ENCODE measurements at regions of chr13 and their contacts with region 1.

Region 1: GRCh38 chr13:91133941-91134802 is 213.3 kb upstream of the MIR17HG start:
- DNase-seq: peak in 7 of 14 experiments; percentile 1 to 56 (median 20)
- ATAC-seq: no peak
- H3K4me3 ChIP-seq: no peak overlapping the region
- H3K4me3 Mint-ChIP-seq: no peak overlapping the region
- H3K27ac ChIP-seq: no peak overlapping the region
- H3K27ac Mint-ChIP-seq: no peak overlapping the region
- H3K4me1 ChIP-seq: no peaks in the 10 kb centered on the region
- H3K4me1 Mint-ChIP-seq: no peaks in the 10 kb centered on the region
- H3K27me3 ChIP-seq: no peaks in the 10 kb centered on the region
- H3K27me3 Mint-ChIP-seq: no peaks in the 10 kb centered on the region
- CTCF ChIP-seq: peak; percentile 69

Region 2: DNA sequence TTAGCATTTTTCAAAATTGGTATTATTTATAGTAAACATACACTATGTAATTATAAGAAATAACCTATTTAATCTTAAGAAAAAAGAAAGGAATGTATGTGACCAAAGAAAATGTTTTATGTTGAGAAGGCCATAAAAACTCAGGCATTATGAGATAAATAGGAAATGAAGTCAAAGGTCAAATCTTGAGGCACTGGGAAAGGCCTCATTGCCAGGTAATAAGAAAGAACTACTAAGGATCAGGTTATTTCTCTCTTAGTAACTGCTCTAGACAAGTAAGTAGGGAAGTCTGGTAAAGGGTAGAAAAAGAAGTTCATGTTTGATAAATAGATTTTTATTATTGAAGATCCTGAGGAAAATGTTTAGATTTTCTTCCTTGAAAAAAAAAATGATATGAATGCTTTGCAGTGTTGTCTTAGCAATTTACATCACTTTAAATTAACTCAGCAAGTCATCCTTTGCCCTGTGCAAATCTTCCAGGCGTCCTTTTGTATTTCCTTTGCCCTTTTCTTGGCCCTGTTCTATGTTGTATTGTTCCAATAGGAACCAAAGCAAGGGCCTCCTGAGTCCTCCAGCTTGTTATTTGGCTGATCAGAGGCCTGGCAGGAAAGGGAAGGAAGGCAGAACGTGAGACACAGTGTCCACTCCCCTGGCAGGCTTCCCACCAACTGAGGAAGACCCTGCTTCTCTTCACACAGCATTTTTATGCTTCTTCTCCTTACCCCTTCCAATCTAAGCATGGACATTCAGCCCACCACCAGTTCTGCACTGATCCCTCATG is 47.0 kb before region 1 on chr13:
- CTCF ChIA-PET with region 1: no interaction called
- POLR2A ChIA-PET with region 1: no interaction called
- intact Hi-C with region 1: no loop called
- DNase-seq: no peak
- ATAC-seq: no peak
- H3K4me3 ChIP-seq: no peak overlapping the region
- H3K4me3 Mint-ChIP-seq: no peak overlapping the region
- H3K27ac ChIP-seq: no peak overlapping the region
- H3K27ac Mint-ChIP-seq: no peak overlapping the region
- H3K4me1 ChIP-seq: no peaks in the 10 kb centered on the region
- H3K4me1 Mint-ChIP-seq: no peaks in the 10 kb centered on the region
- H3K27me3 ChIP-seq: no peaks in the 10 kb centered on the region
- H3K27me3 Mint-ChIP-seq: no peaks in the 10 kb centered on the region
- CTCF ChIP-seq: no peak

Region 3: GRCh38 chr13:91247768-91248167 is 113.6 kb after region 1 on chr13:
- CTCF ChIA-PET with region 1: no interaction called
- POLR2A ChIA-PET with region 1: no interaction called
- intact Hi-C with region 1: loop called in 1 of 2 experiments (anchors 5 kb)
- DNase-seq: no peak
- ATAC-seq: no peak
- H3K4me3 ChIP-seq: no peak overlapping the region
- H3K4me3 Mint-ChIP-seq: no peak overlapping the region
- H3K27ac ChIP-seq: no peak overlapping the region
- H3K27ac Mint-ChIP-seq: no peak overlapping the region
- H3K4me1 ChIP-seq: no peaks in the 10 kb centered on the region
- H3K4me1 Mint-ChIP-seq: no peaks in the 10 kb centered on the region
- H3K27me3 ChIP-seq: peaks cover 0 to 4% of the 10 kb centered on the region in 2 experiments
- H3K27me3 Mint-ChIP-seq: peaks cover 10% of the 10 kb centered on the region
- CTCF ChIP-seq: no peak

Region 4: DNA sequence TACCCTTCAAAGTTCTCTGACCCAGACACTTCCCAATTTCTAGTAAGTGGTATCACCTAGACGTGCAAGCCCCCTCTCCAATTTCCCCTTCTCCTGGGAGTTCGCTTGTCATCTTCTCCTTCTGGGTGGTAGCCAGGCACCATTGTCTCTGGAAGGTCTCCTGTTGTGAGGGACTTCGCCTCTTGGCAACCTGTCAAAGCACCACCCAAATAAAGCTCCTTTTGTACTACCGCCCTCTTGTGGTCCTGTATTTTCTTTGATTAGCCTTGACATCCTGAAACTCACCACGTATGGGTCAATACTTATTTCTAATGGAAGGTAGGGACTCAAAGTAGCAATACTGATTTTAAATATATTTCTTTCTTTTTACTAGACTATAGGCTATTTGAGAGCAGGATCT is 272.4 kb after region 1 on chr13:
- CTCF ChIA-PET with region 1: no interaction called
- POLR2A ChIA-PET with region 1: no interaction called
- intact Hi-C with region 1: loop called (anchors 10 kb)
- DNase-seq: peak in 4 of 14 experiments; percentile 29 to 60 (median 50)
- ATAC-seq: no peak
- H3K4me3 ChIP-seq: no peak overlapping the region
- H3K4me3 Mint-ChIP-seq: no peak overlapping the region
- H3K27ac ChIP-seq: no peak overlapping the region
- H3K27ac Mint-ChIP-seq: no peak overlapping the region
- H3K4me1 ChIP-seq: no peaks in the 10 kb centered on the region
- H3K4me1 Mint-ChIP-seq: no peaks in the 10 kb centered on the region
- H3K27me3 ChIP-seq: peaks cover 0 to 5% of the 10 kb centered on the region in 2 experiments
- H3K27me3 Mint-ChIP-seq: peaks cover 23% of the 10 kb centered on the region
- CTCF ChIP-seq: peak; percentile 50

Region 5: DNA sequence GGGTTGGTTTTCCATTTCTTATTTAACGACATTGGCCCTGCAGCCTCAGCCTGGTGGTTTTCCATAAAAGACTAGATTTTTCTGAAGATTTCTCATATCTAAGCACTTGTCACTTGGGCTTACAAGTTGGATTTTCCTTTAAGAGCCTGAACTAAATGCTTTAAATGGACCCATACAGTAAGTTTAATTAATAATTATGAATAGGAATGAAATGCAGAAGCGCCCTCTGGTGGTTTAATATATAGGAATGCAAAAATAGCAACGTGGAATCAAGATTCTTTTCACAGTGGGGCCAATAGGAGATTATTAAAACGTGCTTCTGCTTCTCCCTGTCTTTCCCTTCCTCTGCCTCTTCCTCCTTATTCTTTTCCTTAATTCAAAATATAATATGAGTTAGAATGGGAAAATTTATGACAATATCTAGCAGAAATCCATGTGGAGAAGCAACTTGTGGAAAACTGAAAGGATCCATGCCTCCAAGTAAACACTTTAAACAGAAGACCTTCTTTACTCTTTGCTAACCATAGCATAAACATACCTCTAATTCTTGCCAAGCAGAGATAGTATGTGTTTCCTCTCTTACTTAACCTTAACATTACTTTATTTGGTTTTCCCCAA is 588.2 kb after region 1 on chr13:
- CTCF ChIA-PET with region 1: no interaction called
- POLR2A ChIA-PET with region 1: no interaction called
- intact Hi-C with region 1: loop called in 1 of 2 experiments (anchors 5 kb)
- DNase-seq: peak in 3 of 14 experiments; percentile 21 to 33 (median 29)
- ATAC-seq: no peak
- H3K4me3 ChIP-seq: no peak overlapping the region
- H3K4me3 Mint-ChIP-seq: no peak overlapping the region
- H3K27ac ChIP-seq: no peak overlapping the region
- H3K27ac Mint-ChIP-seq: no peak overlapping the region
- H3K4me1 ChIP-seq: no peaks in the 10 kb centered on the region
- H3K4me1 Mint-ChIP-seq: no peaks in the 10 kb centered on the region
- H3K27me3 ChIP-seq: no peaks in the 10 kb centered on the region
- H3K27me3 Mint-ChIP-seq: no peaks in the 10 kb centered on the region
- CTCF ChIP-seq: peak; percentile 81